ENCODE measurements at regions of chr15 and their contacts with region 1.

Region 1: GRCh38 chr15:78492872-78493271 is 14.5 kb upstream of the HYKK start:
- DNase-seq: no peak
- ATAC-seq: no peak
- H3K4me3 Mint-ChIP-seq: no peak overlapping the region
- H3K27ac Mint-ChIP-seq: no peak overlapping the region
- H3K4me1 Mint-ChIP-seq: no peaks in the 10 kb centered on the region
- H3K27me3 Mint-ChIP-seq: no peaks in the 10 kb centered on the region
- CTCF ChIP-seq: no peak

Region 2: DNA sequence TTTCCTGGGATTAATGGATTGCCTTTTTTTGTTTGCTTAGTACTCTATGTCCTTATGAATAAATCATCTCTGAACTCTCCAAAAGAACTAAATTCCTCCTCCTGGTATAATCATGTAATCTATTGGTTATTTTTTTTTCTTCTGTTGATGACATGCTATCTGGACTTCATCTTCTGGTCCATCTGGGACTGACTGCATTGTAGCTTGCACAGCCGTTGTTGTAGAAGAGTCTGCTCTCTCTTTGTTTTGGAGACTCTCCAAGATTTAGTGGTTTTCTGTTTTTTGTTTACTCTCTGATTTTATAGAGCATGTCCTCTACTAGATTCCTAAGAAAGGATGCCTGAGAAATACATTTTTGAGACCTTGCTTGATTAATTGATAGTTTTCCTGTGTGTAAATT is 35.8 kb before region 1 on chr15:
- CTCF ChIA-PET with region 1: no interaction called
- POLR2A ChIA-PET with region 1: no interaction called
- intact Hi-C with region 1: loop called (anchors 5 kb)
- DNase-seq: no peak
- ATAC-seq: no peak
- H3K4me3 Mint-ChIP-seq: no peak overlapping the region
- H3K27ac Mint-ChIP-seq: no peak overlapping the region
- H3K4me1 Mint-ChIP-seq: peaks cover 72% of the 10 kb centered on the region
- H3K27me3 Mint-ChIP-seq: no peaks in the 10 kb centered on the region
- CTCF ChIP-seq: no peak